ENCODE measurements at regions of chr12 and their contacts with region 1.

Region 1: GRCh38 chr12:63888908-63889635 is 44.6 kb downstream of the SRGAP1 start:
- DNase-seq: peak; percentile 39 to 43
- ATAC-seq: peak; percentile 69 to 79
- H3K4me3 ChIP-seq: peak overlapping the region; percentile 2; the same call in 1 of the 3 replicates
- H3K27ac ChIP-seq: peak overlapping the region; percentile 86 to 92
- H3K4me1 ChIP-seq: peaks cover 71% of the 10 kb centered on the region
- CTCF ChIP-seq: no peak
- EP300 ChIP-seq: no peak
- POLR2A ChIP-seq: no peak
- RAD21 ChIP-seq: no peak

Region 2: GRCh38 chr12:63869624-63870023 is 19.4 kb before region 1 on chr12:
- CTCF ChIA-PET with region 1: interaction called, 10 read pairs
- POLR2A ChIA-PET with region 1: no interaction called
- DNase-seq: no peak
- ATAC-seq: peak in 1 of 2 experiments; percentile 18; a peak in 1 of 6 replicates
- H3K4me3 ChIP-seq: no peak overlapping the region
- H3K27ac ChIP-seq: peak overlapping the region; percentile 45 to 62; a peak in 4 of 6 replicates
- H3K4me1 ChIP-seq: peaks cover 46% of the 10 kb centered on the region
- CTCF ChIP-seq: no peak
- EP300 ChIP-seq: no peak
- POLR2A ChIP-seq: no peak
- RAD21 ChIP-seq: no peak

Measured in A549 (cell line).